Right ventricle myocardium inferior (tissue), 1 donor: ENCODE measurements at regions of chr10 and their contacts with region 1.

Region 1: DNA sequence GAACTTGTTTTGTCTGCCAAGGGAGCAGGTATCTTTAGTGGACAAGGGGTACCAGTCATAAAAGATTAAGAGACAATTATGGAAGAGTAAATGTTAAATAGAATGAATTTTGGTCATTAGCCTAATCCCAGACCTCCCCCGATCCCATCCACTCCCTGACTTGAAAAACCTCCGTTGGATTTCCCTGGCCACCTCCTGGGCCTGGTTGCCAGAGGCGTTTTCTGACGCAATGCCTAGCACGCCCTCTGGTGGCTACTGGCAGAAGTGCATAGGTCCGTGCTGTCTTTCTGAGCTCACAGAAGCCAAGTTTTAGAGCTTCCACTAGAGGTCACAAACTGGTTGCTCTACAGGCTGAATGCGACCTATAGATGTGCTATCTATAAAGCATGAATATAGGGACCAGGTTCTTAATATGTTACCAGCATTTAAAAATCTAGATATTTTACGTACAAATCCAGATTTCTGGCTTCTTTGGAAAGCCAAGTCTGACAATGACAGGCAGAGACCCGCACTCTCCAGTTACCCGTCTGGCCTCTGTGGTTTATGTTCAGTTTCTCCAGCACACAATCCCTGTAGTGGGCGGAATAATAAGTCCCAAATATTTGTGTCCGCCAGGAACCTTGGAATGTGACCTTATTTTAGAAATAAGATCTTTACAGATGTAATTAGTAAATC is 39.8 kb downstream of the SPOCK2 start:
- DNase-seq: peak; percentile 88
- ATAC-seq: peak; percentile 79

Region 2: DNA sequence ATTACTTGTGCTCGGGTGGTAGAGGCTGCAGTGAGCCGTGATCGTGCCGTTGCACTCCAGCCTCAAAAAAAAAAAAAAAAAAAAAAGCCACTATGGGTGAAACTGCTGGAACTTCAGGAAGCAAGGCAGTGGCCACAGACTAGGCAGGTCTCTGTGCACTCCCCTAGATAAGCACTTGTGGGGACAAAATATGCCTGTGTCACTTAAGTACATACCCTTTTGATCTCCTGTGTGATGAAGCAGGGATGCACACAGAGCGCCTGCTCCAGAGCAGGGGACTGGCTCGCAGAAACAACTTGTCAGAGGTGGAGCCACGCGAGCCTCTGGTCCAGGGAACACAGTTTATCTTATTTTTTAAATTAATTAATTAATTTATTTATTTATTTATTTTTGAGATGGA is 154.7 kb before region 1 on chr10:
- intact Hi-C with region 1: loop called (anchors 1 kb)
- DNase-seq: no peak
- ATAC-seq: no peak

Region 3: DNA sequence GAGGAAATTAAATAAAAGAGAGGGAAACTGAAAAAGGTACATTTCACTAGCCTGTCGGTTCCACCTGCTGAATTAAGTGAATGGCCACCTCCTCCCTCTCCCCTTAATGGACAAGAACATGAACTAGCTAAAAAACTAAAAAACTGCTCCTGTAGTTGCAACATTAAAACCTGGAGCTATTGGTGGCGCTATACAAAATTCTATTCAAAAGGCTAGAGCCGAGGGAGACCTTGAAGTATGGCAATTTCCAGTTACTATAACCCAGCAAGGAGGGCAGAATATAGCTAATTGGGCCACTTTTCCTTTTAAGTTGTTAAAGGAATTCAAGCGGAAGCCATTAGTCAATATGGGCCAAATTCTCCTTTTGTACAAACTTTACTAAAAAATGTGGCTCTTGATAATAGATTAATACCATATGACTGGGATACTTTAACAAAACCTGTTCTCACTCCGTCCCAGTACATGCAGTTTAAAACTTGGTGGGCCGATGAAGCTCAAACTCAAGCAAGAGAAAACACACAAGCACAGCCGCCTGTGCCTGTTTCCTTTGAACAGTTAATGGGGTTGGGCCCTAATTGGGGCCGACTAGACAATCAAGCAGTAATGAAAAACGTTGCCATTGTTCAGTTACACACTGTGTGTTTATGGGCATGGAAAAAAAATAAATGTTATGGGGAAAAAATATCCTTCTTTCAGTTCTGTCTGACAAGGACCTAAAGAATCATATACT is 90.9 kb before region 1 on chr10:
- intact Hi-C with region 1: loop called (anchors 1 kb)
- DNase-seq: no peak
- ATAC-seq: no peak

Region 4: GRCh38 chr10:72223743-72224101 is 175.1 kb after region 1 on chr10:
- intact Hi-C with region 1: loop called (anchors 5 kb)
- DNase-seq: no peak
- ATAC-seq: peak; percentile 24

Region 5: GRCh38 chr10:72334825-72335393 is 286.3 kb after region 1 on chr10:
- intact Hi-C with region 1: loop called (anchors 2 kb)
- DNase-seq: peak; percentile 94
- ATAC-seq: peak; percentile 46